Activated B cell treated with CpG ODN at 0.5 μM for 24 hours (primary cell): ENCODE measurements at regions of chr17 and their contacts with region 1.

Region 1: GRCh38 chr17:28661635-28662537 is at the starts of genes SDF2 and SUPT6H:
- DNase-seq: peak; percentile 95
- ATAC-seq: peak; percentile 83
- H3K4me3 Mint-ChIP-seq: peak within 1 kb of the TSS; percentile 98
- H3K27ac Mint-ChIP-seq: peak within 1 kb of the TSS; percentile 100
- H3K4me1 Mint-ChIP-seq: peaks cover 56% of the 10 kb centered on the region
- H3K27me3 Mint-ChIP-seq: no peaks in the 10 kb centered on the region
- CTCF ChIP-seq: no peak
- total RNA-seq, gene SDF2: 36.1 and 47.7 TPM in 2 replicates
- total RNA-seq, gene SUPT6H: 77.1 and 92.4 TPM in 2 replicates

Region 2: DNA sequence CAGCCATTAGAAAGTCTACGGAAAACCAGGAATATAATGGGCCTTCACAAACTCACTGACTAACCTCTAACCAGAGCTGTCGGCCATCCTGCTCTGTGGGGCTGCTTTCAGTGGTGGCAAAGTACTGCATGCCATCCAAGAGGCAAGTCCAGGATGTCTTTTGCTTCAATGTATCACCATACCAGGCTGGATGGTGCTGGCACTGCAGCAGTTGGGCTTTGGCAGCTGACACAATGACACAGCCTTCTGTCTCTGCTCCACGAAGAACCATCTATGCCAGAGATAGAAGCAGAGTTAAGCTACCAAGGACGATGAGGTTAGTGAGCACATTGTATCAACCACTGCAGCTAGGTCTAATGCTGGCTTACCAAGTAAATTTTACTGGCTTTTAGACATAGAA is 38.2 kb before region 1 on chr17:
- CTCF ChIA-PET with region 1: no interaction called
- POLR2A ChIA-PET with region 1: no interaction called
- intact Hi-C with region 1: no loop called
- DNase-seq: no peak
- ATAC-seq: no peak
- H3K4me3 Mint-ChIP-seq: no peak overlapping the region
- H3K27ac Mint-ChIP-seq: no peak overlapping the region
- H3K4me1 Mint-ChIP-seq: no peaks in the 10 kb centered on the region
- H3K27me3 Mint-ChIP-seq: no peaks in the 10 kb centered on the region
- CTCF ChIP-seq: no peak

Region 3: GRCh38 chr17:28634206-28634856 is 27.6 kb before region 1 on chr17:
- CTCF ChIA-PET with region 1: no interaction called
- POLR2A ChIA-PET with region 1: no interaction called
- intact Hi-C with region 1: no loop called
- DNase-seq: no peak
- ATAC-seq: no peak
- H3K4me3 Mint-ChIP-seq: no peak overlapping the region
- H3K27ac Mint-ChIP-seq: no peak overlapping the region
- H3K4me1 Mint-ChIP-seq: no peaks in the 10 kb centered on the region
- H3K27me3 Mint-ChIP-seq: no peaks in the 10 kb centered on the region
- CTCF ChIP-seq: no peak

Region 4: GRCh38 chr17:28710861-28711722 is 49.2 kb after region 1 on chr17:
- CTCF ChIA-PET with region 1: no interaction called
- POLR2A ChIA-PET with region 1: interaction called, 33 read pairs
- intact Hi-C with region 1: loop called (anchors 2 kb)
- DNase-seq: peak; percentile 94
- ATAC-seq: peak; percentile 89
- H3K4me3 Mint-ChIP-seq: peak overlapping the region; percentile 91
- H3K27ac Mint-ChIP-seq: peak overlapping the region; percentile 96
- H3K4me1 Mint-ChIP-seq: peaks cover 18% of the 10 kb centered on the region
- H3K27me3 Mint-ChIP-seq: no peaks in the 10 kb centered on the region
- CTCF ChIP-seq: no peak

Region 5: DNA sequence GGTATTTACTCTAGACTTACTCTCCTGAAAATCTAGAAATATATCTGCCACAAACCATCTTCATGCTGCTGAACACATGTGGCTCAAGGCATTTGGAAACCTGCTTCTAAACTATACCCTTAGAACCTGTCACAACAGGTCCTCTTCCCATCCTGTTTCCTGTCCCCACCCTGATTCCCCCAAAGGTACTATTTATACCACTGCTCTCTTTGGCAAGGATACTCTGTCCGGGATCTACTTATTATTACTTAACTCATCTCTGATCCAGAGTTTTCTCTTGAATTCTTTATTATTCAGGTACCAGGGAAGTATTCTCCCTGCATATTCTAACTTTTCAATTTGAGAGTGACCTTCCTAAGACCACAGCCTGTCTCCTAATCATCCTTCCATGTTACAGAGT is 115.3 kb after region 1 on chr17:
- CTCF ChIA-PET with region 1: no interaction called
- POLR2A ChIA-PET with region 1: interaction called, 10 read pairs
- intact Hi-C with region 1: no loop called
- DNase-seq: no peak
- ATAC-seq: no peak
- H3K4me3 Mint-ChIP-seq: no peak overlapping the region
- H3K27ac Mint-ChIP-seq: no peak overlapping the region
- H3K4me1 Mint-ChIP-seq: peaks cover 32% of the 10 kb centered on the region
- H3K27me3 Mint-ChIP-seq: no peaks in the 10 kb centered on the region
- CTCF ChIP-seq: no peak

Region 6: DNA sequence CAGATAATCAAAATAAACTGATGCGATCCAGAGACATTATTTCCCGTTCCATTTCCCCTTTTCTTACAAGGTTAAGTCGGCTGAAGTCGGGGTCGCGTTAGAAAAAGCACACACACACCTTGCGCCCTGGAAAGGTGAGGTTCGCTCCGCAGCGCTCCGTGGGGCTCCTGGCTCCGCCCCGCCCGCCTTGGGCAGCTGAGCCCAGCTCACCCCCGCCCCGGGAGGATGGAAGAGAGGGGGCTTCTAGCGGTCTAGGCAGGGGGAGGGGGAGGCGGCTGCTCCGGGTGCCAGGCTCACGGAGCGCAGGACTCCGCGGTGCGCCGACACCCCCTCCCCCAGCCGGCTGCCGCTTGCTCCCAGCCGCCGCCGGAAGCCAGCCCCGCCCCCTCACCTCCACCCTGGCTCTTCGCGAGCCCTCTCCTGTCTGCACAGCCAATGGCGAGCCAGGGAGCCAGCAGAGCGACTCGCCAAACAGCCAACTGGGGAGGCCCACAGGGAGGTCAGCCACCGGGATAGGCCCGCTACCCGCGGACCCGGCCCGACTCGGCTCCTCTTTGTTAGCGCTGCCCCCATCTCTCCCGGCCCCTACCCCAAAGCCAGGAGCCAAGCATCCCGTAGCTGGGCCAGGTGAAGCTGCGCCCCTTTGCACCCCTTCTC is 150.3 kb after region 1 on chr17:
- CTCF ChIA-PET with region 1: no interaction called
- POLR2A ChIA-PET with region 1: no interaction called
- intact Hi-C with region 1: loop called (anchors 5 kb)
- DNase-seq: peak; percentile 89
- ATAC-seq: peak; percentile 100
- H3K4me3 Mint-ChIP-seq: peak overlapping the region; percentile 87
- H3K27ac Mint-ChIP-seq: peak overlapping the region; percentile 83
- H3K4me1 Mint-ChIP-seq: peaks cover 31% of the 10 kb centered on the region
- H3K27me3 Mint-ChIP-seq: no peaks in the 10 kb centered on the region
- CTCF ChIP-seq: no peak

Region 7: GRCh38 chr17:28940675-28941074 is 278.8 kb after region 1 on chr17:
- CTCF ChIA-PET with region 1: no interaction called
- POLR2A ChIA-PET with region 1: no interaction called
- intact Hi-C with region 1: no loop called
- DNase-seq: no peak
- ATAC-seq: no peak
- H3K4me3 Mint-ChIP-seq: no peak overlapping the region
- H3K27ac Mint-ChIP-seq: no peak overlapping the region
- H3K4me1 Mint-ChIP-seq: peaks cover 81% of the 10 kb centered on the region
- H3K27me3 Mint-ChIP-seq: no peaks in the 10 kb centered on the region
- CTCF ChIP-seq: no peak

Region 8: GRCh38 chr17:29102741-29103181 is 440.9 kb after region 1 on chr17:
- CTCF ChIA-PET with region 1: no interaction called
- POLR2A ChIA-PET with region 1: interaction called, 20 read pairs
- intact Hi-C with region 1: no loop called
- DNase-seq: no peak
- ATAC-seq: no peak
- H3K4me3 Mint-ChIP-seq: no peak overlapping the region
- H3K27ac Mint-ChIP-seq: no peak overlapping the region
- H3K4me1 Mint-ChIP-seq: no peaks in the 10 kb centered on the region
- H3K27me3 Mint-ChIP-seq: no peaks in the 10 kb centered on the region
- CTCF ChIP-seq: no peak